CD8-positive, alpha-beta T cell (primary cell): ENCODE measurements at regions of chr6 and their contacts with region 1.

Region 1: DNA sequence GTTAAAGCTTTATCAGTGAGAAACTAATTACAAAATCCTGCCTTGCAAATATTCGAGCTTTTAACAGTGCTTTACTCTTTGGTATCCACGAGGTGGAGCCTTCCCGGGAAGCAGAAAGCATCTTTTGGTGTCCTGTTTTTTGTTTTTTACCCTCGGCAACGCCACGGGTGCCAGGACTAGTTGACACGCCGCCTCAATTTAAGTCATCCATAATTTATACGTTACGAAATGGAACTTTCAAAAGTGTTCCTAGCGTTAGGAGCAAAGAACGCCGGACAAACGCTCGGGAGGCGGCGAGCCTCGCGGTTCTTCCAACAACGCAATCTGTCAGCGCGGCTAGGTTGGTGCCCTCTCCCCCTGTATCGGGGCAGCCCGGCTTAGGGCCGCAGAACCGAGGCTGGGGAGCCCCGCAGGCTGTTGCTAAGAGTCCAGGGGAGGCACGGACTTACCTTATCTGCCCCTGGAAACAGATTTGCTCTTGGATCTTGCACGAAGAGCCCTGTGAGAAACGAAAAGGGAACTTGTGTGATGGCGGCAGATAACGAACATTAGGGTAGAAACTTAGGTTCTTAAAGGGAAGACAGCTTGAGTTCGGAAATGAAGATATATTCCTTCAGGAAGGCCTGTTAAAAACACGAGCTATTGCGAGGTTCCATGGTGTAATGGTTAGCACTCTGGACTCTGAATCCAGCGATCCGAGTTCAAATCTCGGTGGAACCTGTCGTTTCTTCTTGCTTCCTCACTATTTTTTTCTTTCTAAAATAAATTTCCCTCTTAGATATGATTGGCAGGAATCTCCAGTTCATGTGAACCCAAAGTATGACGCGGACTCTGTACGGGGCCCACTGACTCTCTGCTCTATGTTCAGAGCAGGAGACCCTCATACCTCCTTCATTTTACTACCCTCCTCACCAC is 46.2 kb upstream of the ZNF184 start:
- DNase-seq: peak; percentile 29 to 88 (median 61)
- ATAC-seq: peak; percentile 78
- H3K4me3 ChIP-seq: peak overlapping the region; percentile 74 to 88
- H3K4me3 Mint-ChIP-seq: peak overlapping the region; percentile 83
- H3K27ac ChIP-seq: peak overlapping the region; percentile 59 to 72
- H3K27ac Mint-ChIP-seq: peak overlapping the region; percentile 83
- H3K4me1 ChIP-seq: peaks cover 10% of the 10 kb centered on the region
- H3K4me1 Mint-ChIP-seq: peaks cover 19% of the 10 kb centered on the region
- H3K27me3 ChIP-seq: peaks cover 0 to 9% of the 10 kb centered on the region in 2 experiments
- H3K27me3 Mint-ChIP-seq: peaks cover 18% of the 10 kb centered on the region
- CTCF ChIP-seq: peak; percentile 77

Region 2: DNA sequence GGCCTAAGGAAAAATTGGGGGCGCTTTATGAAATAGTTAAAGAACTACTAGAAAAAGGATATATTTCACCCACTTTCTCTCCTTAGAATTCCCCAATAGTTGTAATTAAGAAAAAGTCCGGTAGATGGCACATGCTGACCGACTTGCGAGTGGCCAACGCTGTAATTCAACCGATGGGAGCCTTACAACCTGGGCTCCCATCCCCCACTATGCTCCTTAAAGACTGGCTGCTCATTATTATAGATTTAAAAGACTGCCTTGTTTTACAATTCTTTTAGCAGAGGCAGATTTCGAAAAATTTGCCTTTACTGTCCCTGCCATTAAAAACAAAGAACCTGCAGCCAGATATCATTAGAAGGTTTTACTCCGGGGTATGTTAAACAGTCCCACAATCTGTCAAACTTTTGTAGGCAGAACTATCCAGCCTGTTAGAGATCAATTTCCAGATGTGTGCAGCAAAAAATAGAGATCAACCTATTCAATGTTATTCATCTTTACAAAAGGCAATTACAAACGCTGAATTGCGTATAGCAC is 330.2 kb before region 1 on chr6:
- CTCF ChIA-PET with region 1: no interaction called
- POLR2A ChIA-PET with region 1: no interaction called
- intact Hi-C with region 1: no loop called
- DNase-seq: peak in 8 of 9 experiments; percentile 24 to 86 (median 50)
- ATAC-seq: peak; percentile 77
- H3K4me3 ChIP-seq: peak overlapping the region; percentile 58 to 62
- H3K4me3 Mint-ChIP-seq: peak overlapping the region; percentile 87
- H3K27ac ChIP-seq: peak overlapping the region in 1 of 2 experiments; percentile 33
- H3K27ac Mint-ChIP-seq: no peak overlapping the region
- H3K4me1 ChIP-seq: peaks cover 4% of the 10 kb centered on the region
- H3K4me1 Mint-ChIP-seq: peaks cover 10% of the 10 kb centered on the region
- H3K27me3 ChIP-seq: no peaks in the 10 kb centered on the region
- H3K27me3 Mint-ChIP-seq: no peaks in the 10 kb centered on the region
- CTCF ChIP-seq: peak; percentile 66

Region 3: GRCh38 chr6:27503436-27504030 is 15.6 kb before region 1 on chr6:
- CTCF ChIA-PET with region 1: interaction called, 14 read pairs
- POLR2A ChIA-PET with region 1: interaction called, 3 read pairs
- intact Hi-C with region 1: loop called (anchors 1 kb)
- DNase-seq: peak; percentile 58 to 90 (median 79)
- ATAC-seq: peak; percentile 62
- H3K4me3 ChIP-seq: peak overlapping the region; percentile 61 to 70
- H3K4me3 Mint-ChIP-seq: peak overlapping the region; percentile 94
- H3K27ac ChIP-seq: peak overlapping the region; percentile 34 to 46
- H3K27ac Mint-ChIP-seq: peak overlapping the region; percentile 90
- H3K4me1 ChIP-seq: peaks cover 11% of the 10 kb centered on the region
- H3K4me1 Mint-ChIP-seq: peaks cover 38% of the 10 kb centered on the region
- H3K27me3 ChIP-seq: peaks cover 0 to 7% of the 10 kb centered on the region in 2 experiments
- H3K27me3 Mint-ChIP-seq: peaks cover 4% of the 10 kb centered on the region
- CTCF ChIP-seq: no peak